PC-3 (cell line): ENCODE measurements at regions of chr20 and their contacts with region 1.

Region 1: GRCh38 chr20:31652917-31653396 is 15.2 kb downstream of the COX4I2 start:
- DNase-seq: peak; percentile 71
- ATAC-seq: peak; percentile 89
- H3K4me3 ChIP-seq: no peak overlapping the region
- H3K27ac ChIP-seq: no peak overlapping the region
- H3K4me1 ChIP-seq: peaks cover 11% of the 10 kb centered on the region
- H3K27me3 ChIP-seq: no peaks in the 10 kb centered on the region
- CTCF ChIP-seq: no peak

Region 2: DNA sequence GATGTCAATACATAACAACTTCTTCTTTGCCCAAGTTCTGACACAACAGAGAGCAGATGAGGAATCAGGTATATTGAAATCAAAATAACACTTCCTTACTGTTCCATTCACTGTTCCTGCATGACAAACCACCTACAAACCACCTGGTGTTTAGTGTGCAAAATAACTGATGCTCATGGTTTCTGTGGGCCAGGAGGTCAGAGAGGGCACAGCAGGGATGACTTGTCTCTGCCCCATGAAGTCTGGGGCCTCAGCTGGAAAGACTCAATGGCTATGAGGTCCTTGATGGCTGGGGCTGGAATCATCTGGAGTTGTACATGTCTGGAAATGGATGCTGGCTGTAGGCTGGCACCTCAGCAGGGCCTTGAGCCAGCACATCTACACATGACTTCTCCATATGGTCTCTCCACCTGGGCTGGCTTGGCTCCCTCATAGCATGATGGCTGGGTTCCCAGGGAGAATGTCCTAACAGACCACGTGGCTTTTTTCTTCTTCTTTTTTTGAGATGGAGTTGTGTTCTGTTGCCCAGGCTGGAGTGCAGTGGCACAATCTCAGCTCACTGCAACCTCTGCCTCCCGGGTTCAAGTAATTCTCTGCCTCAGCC is 22.7 kb before region 1 on chr20:
- CTCF ChIA-PET with region 1: interaction called, 3 read pairs
- POLR2A ChIA-PET with region 1: interaction called, 23 read pairs
- intact Hi-C with region 1: no loop called
- DNase-seq: no peak
- ATAC-seq: no peak
- H3K4me3 ChIP-seq: no peak overlapping the region
- H3K27ac ChIP-seq: no peak overlapping the region
- H3K4me1 ChIP-seq: no peaks in the 10 kb centered on the region
- H3K27me3 ChIP-seq: no peaks in the 10 kb centered on the region
- CTCF ChIP-seq: no peak